Activated CD4-positive, alpha-beta memory T cell treated with anti-CD3 and anti-CD28 coated beads for 36 hours (primary cell): ENCODE measurements at regions of chrX and their contacts with region 1.

Region 1: GRCh38 chrX:150365051-150365989 is 2.2 kb downstream of the MAMLD1 start:
- DNase-seq: peak; percentile 76
- H3K4me3 Mint-ChIP-seq: peak overlapping the region; percentile 78
- H3K27ac Mint-ChIP-seq: peak overlapping the region; percentile 64
- H3K4me1 Mint-ChIP-seq: peaks cover 18% of the 10 kb centered on the region
- H3K27me3 Mint-ChIP-seq: peaks cover 5% of the 10 kb centered on the region

Region 2: DNA sequence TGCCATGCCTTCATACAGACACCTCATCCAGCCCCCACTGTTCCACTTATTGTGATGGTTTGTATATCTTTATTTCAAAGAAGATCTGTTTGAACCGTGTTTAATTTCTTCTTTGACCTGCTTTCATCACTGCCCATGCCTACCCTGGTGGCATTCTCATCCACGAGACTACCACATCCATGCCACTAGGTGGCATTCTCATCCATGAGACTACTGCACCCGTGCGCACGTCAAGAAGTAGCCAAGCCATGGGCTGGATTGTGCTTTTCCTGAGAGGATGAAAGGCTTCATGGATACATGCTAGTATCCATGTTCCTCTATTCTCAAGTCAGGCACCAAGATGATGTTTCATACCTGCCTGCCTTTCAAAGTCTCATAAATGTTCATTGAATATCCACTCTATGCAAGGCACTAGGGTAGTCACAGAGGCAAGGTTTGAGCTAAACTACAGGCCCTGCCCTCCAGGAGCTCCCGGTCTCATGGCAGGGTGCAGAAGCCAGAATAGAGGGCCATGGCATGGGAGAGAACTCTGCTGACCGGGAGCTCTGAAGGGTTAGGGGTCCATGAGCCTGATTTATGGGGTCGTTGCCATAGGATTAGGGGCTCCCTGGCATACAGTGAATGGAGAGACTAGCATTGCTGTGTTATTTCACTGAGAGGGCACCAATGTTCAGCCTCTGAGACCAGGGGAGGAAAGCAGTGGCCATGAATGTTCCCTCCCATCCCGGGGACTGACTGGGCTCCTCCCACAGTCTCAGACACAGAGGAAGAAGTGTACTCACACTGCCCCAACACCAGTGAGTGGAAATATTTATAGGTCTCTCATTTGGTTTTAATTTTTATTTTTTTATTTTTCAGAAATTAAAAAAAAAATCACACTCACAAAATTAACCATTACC is 402.2 kb before region 1 on chrX:
- CTCF ChIA-PET with region 1: interaction called, 3 read pairs
- POLR2A ChIA-PET with region 1: no interaction called
- intact Hi-C with region 1: loop called (anchors 5 kb)
- DNase-seq: peak; percentile 35
- H3K4me3 Mint-ChIP-seq: no peak overlapping the region
- H3K27ac Mint-ChIP-seq: no peak overlapping the region
- H3K4me1 Mint-ChIP-seq: peaks cover 4% of the 10 kb centered on the region
- H3K27me3 Mint-ChIP-seq: no peaks in the 10 kb centered on the region

Region 3: DNA sequence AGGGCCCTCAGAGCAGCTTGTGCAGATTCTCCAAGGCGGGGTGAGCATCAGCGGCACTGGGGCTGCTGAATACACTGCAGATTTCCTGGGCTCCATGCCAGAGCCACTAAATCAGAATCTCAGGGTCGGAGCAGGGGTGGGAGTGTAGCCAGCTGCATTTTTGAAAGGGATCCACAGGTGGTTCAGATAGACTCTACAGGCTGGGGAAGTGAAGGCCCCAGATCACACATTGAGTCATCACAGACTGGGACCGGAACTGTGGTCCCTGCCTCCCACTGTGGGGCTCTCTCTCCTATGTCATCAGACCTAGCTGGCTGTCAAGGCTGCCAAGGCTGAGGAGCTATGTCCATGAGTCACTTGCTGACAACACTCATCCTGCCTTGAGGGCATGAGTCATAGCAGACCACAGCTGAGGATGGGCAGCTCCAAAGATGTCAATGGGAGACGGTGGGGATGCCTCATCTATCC is 164.5 kb before region 1 on chrX:
- CTCF ChIA-PET with region 1: interaction called, 3 read pairs
- POLR2A ChIA-PET with region 1: no interaction called
- intact Hi-C with region 1: loop called (anchors 2 kb)
- DNase-seq: peak; percentile 82
- H3K4me3 Mint-ChIP-seq: no peak overlapping the region
- H3K27ac Mint-ChIP-seq: no peak overlapping the region
- H3K4me1 Mint-ChIP-seq: peaks cover 10% of the 10 kb centered on the region
- H3K27me3 Mint-ChIP-seq: no peaks in the 10 kb centered on the region

Region 4: GRCh38 chrX:150238632-150239382 is 126.5 kb before region 1 on chrX:
- CTCF ChIA-PET with region 1: no interaction called
- POLR2A ChIA-PET with region 1: no interaction called
- intact Hi-C with region 1: no loop called
- DNase-seq: no peak
- H3K4me3 Mint-ChIP-seq: no peak overlapping the region
- H3K27ac Mint-ChIP-seq: no peak overlapping the region
- H3K4me1 Mint-ChIP-seq: no peaks in the 10 kb centered on the region
- H3K27me3 Mint-ChIP-seq: no peaks in the 10 kb centered on the region

Region 5: GRCh38 chrX:150478496-150479492 is 113.5 kb after region 1 on chrX:
- CTCF ChIA-PET with region 1: interaction called, 11 read pairs
- POLR2A ChIA-PET with region 1: interaction called, 3 read pairs
- intact Hi-C with region 1: loop called (anchors 2 kb)
- DNase-seq: peak; percentile 61
- H3K4me3 Mint-ChIP-seq: peak overlapping the region; percentile 62
- H3K27ac Mint-ChIP-seq: peak overlapping the region; percentile 82
- H3K4me1 Mint-ChIP-seq: peaks cover 62% of the 10 kb centered on the region
- H3K27me3 Mint-ChIP-seq: no peaks in the 10 kb centered on the region

Region 6: DNA sequence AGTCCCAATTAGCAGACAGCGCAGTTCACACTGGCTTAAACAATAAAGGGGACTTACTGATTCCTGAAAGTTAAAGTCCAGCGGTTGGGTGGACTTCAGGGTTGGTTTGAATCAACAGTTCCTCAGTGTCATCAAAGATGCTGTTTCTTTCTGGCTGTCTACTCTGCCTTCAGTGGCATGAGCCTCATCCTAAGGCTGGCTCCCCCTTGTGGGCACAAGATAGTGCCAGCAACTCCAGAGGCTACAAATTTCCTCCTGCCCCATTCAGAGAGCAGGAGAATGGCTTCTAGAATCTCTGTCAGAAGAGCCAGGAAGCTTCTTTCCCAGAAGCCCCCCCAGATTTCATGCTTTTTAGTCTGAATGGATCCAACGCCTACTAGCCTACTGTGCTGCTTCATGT is 120.7 kb after region 1 on chrX:
- CTCF ChIA-PET with region 1: interaction called, 11 read pairs
- POLR2A ChIA-PET with region 1: interaction called, 3 read pairs
- intact Hi-C with region 1: loop called (anchors 2 kb)
- DNase-seq: peak; percentile 52
- H3K4me3 Mint-ChIP-seq: no peak overlapping the region
- H3K27ac Mint-ChIP-seq: no peak overlapping the region
- H3K4me1 Mint-ChIP-seq: peaks cover 27% of the 10 kb centered on the region
- H3K27me3 Mint-ChIP-seq: no peaks in the 10 kb centered on the region